Activated CD4-positive, alpha-beta memory T cell treated with anti-CD3 and anti-CD28 coated beads for 36 hours (primary cell): ENCODE measurements at regions of chr6 and their contacts with region 1.

Region 1: GRCh38 chr6:135577059-135577538 is 79.6 kb upstream of the AHI1 start:
- DNase-seq: no peak
- H3K4me3 Mint-ChIP-seq: no peak overlapping the region
- H3K27ac Mint-ChIP-seq: peak overlapping the region; percentile 42
- H3K4me1 Mint-ChIP-seq: peaks cover 19% of the 10 kb centered on the region
- H3K27me3 Mint-ChIP-seq: no peaks in the 10 kb centered on the region

Region 2: GRCh38 chr6:135257631-135258405 is 319.3 kb before region 1 on chr6:
- CTCF ChIA-PET with region 1: no interaction called
- POLR2A ChIA-PET with region 1: no interaction called
- intact Hi-C with region 1: no loop called
- DNase-seq: no peak
- H3K4me3 Mint-ChIP-seq: no peak overlapping the region
- H3K27ac Mint-ChIP-seq: no peak overlapping the region
- H3K4me1 Mint-ChIP-seq: no peaks in the 10 kb centered on the region
- H3K27me3 Mint-ChIP-seq: no peaks in the 10 kb centered on the region

Region 3: GRCh38 chr6:135624402-135625295 is 47.5 kb after region 1 on chr6:
- CTCF ChIA-PET with region 1: no interaction called
- POLR2A ChIA-PET with region 1: interaction called, 3 read pairs
- intact Hi-C with region 1: loop called (anchors 5 kb)
- DNase-seq: no peak
- H3K4me3 Mint-ChIP-seq: no peak overlapping the region
- H3K27ac Mint-ChIP-seq: no peak overlapping the region
- H3K4me1 Mint-ChIP-seq: peaks cover 14% of the 10 kb centered on the region
- H3K27me3 Mint-ChIP-seq: peaks cover 6% of the 10 kb centered on the region

Region 4: GRCh38 chr6:135647521-135647920 is 70.4 kb after region 1 on chr6:
- CTCF ChIA-PET with region 1: no interaction called
- POLR2A ChIA-PET with region 1: no interaction called
- intact Hi-C with region 1: loop called (anchors 2 kb)
- DNase-seq: peak; percentile 20
- H3K4me3 Mint-ChIP-seq: no peak overlapping the region
- H3K27ac Mint-ChIP-seq: no peak overlapping the region
- H3K4me1 Mint-ChIP-seq: peaks cover 25% of the 10 kb centered on the region
- H3K27me3 Mint-ChIP-seq: no peaks in the 10 kb centered on the region

Region 5: DNA sequence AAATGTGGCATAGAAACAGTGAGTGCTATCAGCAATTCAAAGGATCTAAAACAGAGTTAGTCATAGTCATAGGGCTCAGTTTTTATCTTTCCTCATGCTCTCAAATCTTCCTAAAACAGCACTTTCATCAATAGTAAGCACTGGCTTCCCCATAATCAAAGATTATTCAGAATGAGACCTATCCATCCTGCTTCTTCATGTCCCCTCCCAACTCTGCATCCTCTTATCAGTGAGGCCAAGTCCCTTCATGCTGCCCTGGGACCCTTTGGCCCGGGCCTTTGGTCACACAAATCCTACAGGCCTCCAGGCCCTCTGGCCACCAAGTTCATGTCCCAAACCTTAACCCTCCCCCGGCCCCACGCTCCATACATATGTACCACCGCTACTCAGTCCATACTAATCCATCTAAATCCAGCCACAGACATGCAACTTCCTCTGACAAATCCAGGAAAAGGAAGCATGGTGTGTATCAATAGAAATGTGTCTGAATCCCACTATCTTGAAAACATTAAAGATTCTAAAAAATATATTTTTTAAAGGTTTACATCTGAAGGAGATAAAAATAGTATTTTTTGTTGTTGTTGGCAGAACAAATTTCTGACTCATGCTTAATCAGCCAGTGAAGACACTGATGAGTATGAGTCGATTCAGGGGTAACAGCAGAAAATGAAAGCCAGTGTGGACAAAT is 417.9 kb after region 1 on chr6:
- CTCF ChIA-PET with region 1: no interaction called
- POLR2A ChIA-PET with region 1: no interaction called
- intact Hi-C with region 1: no loop called
- DNase-seq: no peak
- H3K4me3 Mint-ChIP-seq: no peak overlapping the region
- H3K27ac Mint-ChIP-seq: no peak overlapping the region
- H3K4me1 Mint-ChIP-seq: no peaks in the 10 kb centered on the region
- H3K27me3 Mint-ChIP-seq: peaks cover 1% of the 10 kb centered on the region